Activated B cell treated with CpG ODN at 0.5 μM for 24 hours (primary cell): ENCODE measurements at regions of chrX and their contacts with region 1.

Region 1: GRCh38 chrX:153599192-153600031 is 473 bp upstream of the CCNQ start:
- DNase-seq: peak; percentile 82
- ATAC-seq: peak; percentile 84
- H3K4me3 Mint-ChIP-seq: peak overlapping the region; percentile 77
- H3K27ac Mint-ChIP-seq: no peak overlapping the region
- H3K4me1 Mint-ChIP-seq: peaks cover 36% of the 10 kb centered on the region
- H3K27me3 Mint-ChIP-seq: no peaks in the 10 kb centered on the region
- CTCF ChIP-seq: no peak

Region 2: DNA sequence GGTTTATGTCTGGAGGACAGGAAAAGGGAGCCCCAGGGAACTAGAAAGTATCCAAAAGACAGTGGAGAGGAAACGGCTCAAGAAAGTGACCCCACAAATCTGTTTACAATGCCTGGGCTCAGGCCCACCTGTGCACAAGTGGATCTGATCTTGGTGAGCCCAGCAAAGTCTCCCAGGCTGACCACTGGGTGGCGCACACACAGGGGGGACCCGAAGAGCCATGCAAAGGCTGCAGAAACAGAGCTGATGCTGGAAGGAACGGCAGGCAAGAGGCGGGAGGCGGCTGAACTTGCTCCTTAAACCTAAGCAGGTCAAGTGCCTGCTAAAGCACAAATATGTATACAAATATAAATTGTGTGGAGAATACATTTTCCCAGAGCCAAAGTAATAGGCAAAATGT is 138.6 kb before region 1 on chrX:
- CTCF ChIA-PET with region 1: no interaction called
- POLR2A ChIA-PET with region 1: no interaction called
- intact Hi-C with region 1: no loop called
- DNase-seq: no peak
- ATAC-seq: peak; percentile 62
- H3K4me3 Mint-ChIP-seq: no peak overlapping the region
- H3K27ac Mint-ChIP-seq: no peak overlapping the region
- H3K4me1 Mint-ChIP-seq: no peaks in the 10 kb centered on the region
- H3K27me3 Mint-ChIP-seq: no peaks in the 10 kb centered on the region
- CTCF ChIP-seq: no peak

Region 3: DNA sequence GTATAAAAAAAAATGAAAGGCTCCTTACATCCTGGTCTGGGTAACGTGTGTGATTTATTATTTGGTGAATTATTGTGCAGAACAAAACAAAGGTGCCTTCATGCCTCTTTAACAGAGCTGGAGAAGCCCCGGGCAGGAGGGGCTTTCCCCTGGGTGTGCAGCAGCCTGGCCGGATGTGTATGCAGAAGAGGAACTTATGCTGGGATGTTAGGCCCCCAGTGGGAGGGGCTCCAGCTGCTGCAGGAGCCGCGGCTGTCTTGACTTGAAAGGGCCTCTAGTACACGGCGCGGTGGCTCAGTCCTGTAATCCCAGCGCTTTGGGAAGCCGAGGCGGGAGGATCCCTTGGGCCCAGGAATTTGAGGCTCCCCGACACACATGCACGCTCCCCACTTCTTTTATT is 16.5 kb before region 1 on chrX:
- CTCF ChIA-PET with region 1: interaction called, 3 read pairs
- POLR2A ChIA-PET with region 1: interaction called, 9 read pairs
- intact Hi-C with region 1: loop called (anchors 1 kb)
- DNase-seq: peak; percentile 53
- ATAC-seq: peak; percentile 100
- H3K4me3 Mint-ChIP-seq: peak overlapping the region; percentile 60
- H3K27ac Mint-ChIP-seq: peak overlapping the region; percentile 73
- H3K4me1 Mint-ChIP-seq: peaks cover 31% of the 10 kb centered on the region
- H3K27me3 Mint-ChIP-seq: no peaks in the 10 kb centered on the region
- CTCF ChIP-seq: no peak